ENCODE measurements at regions of chr6 and their contacts with region 1.

Region 1: GRCh38 chr6:25851961-25852360 is 20.1 kb upstream of the SLC17A1 start:
- DNase-seq: no peak
- ATAC-seq: no peak
- H3K4me3 ChIP-seq: no peak overlapping the region
- H3K4me3 Mint-ChIP-seq: no peak overlapping the region
- H3K27ac ChIP-seq: no peak overlapping the region
- H3K27ac Mint-ChIP-seq: peak overlapping the region; percentile 29 to 81
- H3K4me1 ChIP-seq: no peaks in the 10 kb centered on the region
- H3K4me1 Mint-ChIP-seq: peaks cover 7 to 13% (median 12%) of the 10 kb centered on the region in 3 donors
- H3K27me3 ChIP-seq: peaks cover 0 to 3% of the 10 kb centered on the region in 2 experiments
- H3K27me3 Mint-ChIP-seq: peaks cover 0 to 4% of the 10 kb centered on the region in 2 donors

Region 2: GRCh38 chr6:25829375-25829774 is 22.6 kb before region 1 on chr6:
- CTCF ChIA-PET with region 1: no interaction called
- POLR2A ChIA-PET with region 1: no interaction called
- DNase-seq: no peak
- ATAC-seq: no peak
- H3K4me3 ChIP-seq: no peak overlapping the region
- H3K4me3 Mint-ChIP-seq: no peak overlapping the region
- H3K27ac ChIP-seq: no peak overlapping the region
- H3K27ac Mint-ChIP-seq: no peak overlapping the region
- H3K4me1 ChIP-seq: no peaks in the 10 kb centered on the region
- H3K4me1 Mint-ChIP-seq: no peaks in the 10 kb centered on the region
- H3K27me3 ChIP-seq: no peaks in the 10 kb centered on the region
- H3K27me3 Mint-ChIP-seq: peaks cover 19 to 26% of the 10 kb centered on the region in 2 donors

Region 3: DNA sequence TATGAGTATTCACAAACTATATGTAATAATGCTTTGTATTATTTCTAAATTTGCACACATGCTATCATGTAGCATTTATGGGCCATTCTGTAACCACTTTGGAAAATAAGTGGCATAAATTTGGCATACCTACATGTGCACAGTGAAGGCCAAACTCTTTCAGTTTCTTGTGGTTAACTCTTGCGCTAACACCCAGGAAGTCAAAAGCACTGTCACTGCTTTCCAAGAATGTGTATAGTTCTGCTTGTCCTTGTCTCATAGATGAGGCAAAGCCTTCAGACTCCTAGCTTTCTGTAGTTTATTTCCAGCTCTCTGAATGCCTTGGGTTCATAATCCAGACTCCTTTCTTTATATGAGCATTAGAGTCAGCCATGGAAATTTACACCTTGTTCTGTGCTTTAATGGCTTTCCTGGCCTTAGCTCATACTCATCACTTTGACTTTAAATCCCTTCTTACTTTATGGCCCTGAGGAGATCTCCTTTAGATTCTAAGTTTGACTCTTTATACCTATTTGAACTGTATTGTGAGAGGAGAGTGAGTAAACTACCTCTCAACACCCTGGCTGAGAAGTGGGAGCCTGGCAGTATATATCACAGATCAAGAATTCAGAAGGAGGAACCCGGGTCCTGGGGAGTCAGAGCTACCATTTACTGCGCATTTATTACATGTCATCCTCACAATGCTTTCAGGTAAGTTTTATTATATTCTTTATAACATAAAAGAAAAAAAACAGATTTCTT is 23.0 kb after region 1 on chr6:
- CTCF ChIA-PET with region 1: no interaction called
- POLR2A ChIA-PET with region 1: interaction called in 1 of 2 experiments, 13 read pairs
- DNase-seq: peak in 1 of 35 experiments; percentile 29
- ATAC-seq: peak; percentile 54 to 76 (median 64)
- H3K4me3 ChIP-seq: no peak overlapping the region
- H3K4me3 Mint-ChIP-seq: no peak overlapping the region
- H3K27ac ChIP-seq: no peak overlapping the region
- H3K27ac Mint-ChIP-seq: peak overlapping the region in 1 of 2 donors; percentile 3
- H3K4me1 ChIP-seq: peaks cover 6 to 12% of the 10 kb centered on the region in 2 experiments
- H3K4me1 Mint-ChIP-seq: peaks cover 22 to 39% (median 31%) of the 10 kb centered on the region in 3 donors
- H3K27me3 ChIP-seq: no peaks in the 10 kb centered on the region
- H3K27me3 Mint-ChIP-seq: no peaks in the 10 kb centered on the region

Measured in T-cell (primary cell).